Activated CD4-positive, alpha-beta memory T cell treated with anti-CD3 and anti-CD28 coated beads for 36 hours (primary cell): ENCODE measurements at regions of chr12 and their contacts with region 1.

Region 1: DNA sequence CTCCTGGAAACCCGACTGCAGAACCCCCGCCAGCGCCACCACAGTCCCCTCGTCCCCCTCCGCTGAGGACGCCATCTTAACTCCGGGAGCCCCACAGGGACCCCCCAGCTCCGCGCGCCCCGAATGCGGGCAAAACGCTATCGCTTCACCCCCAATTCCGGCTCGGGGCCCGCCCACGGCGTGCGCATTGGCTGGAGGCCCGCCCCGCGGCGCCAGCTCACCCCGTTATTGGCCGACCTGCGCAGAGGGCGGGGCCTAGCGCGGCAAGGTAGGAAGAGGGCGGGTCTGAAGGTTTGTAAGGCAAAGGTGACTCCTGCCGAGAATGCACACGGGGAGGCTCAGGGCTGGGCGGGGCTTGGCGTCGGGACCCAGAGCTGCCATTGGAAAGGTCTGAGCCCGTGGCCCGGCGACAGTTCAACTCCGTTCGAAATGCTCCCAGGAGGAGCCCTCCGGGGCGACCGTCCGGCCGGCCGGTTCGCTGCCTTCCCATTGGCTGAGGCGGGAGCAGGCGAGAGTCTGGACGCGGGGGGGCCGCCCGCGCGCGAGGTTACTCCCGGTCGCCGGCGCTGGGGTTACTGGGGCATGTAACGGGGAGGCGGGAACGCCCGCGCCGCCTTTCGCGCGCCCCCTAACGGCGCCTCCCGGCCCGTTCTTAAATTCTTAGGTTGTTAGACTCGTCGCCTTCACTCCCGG is at the start of gene LPCAT3:
- DNase-seq: peak; percentile 98
- H3K4me3 Mint-ChIP-seq: peak within 1 kb of the TSS; percentile 88
- H3K27ac Mint-ChIP-seq: peak within 1 kb of the TSS; percentile 73
- H3K4me1 Mint-ChIP-seq: peaks cover 26% of the 10 kb centered on the region
- H3K27me3 Mint-ChIP-seq: no peaks in the 10 kb centered on the region
- total RNA-seq, gene LPCAT3: 18.3 to 20.5 TPM

Region 2: DNA sequence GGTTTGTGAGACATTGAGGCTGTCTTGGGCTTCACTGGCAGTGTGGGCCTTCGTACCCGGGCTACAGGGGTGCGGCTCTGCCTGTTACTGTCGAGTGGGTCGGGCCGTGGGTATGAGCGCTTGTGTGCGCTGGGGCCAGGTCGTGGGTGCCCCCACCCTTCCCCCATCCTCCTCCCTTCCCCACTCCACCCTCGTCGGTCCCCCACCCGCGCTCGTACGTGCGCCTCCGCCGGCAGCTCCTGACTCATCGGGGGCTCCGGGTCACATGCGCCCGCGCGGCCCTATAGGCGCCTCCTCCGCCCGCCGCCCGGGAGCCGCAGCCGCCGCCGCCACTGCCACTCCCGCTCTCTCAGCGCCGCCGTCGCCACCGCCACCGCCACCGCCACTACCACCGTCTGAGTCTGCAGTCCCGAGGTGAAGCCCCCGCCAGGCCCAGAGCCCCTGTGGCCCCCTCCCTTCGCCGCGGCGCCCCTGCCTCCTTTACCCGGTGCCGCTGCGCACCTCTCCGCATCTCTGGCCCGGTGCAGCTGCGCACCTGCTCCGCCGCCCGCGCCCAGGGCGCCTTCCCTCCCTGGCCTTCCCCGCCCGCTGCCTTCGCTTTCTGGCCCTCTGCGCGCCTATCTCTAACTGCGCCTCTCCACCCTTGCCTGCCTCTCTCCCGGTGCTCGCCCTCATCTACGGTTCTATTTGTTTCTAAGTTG is 104.1 kb before region 1 on chr12 and contains the start of gene ENO2:
- CTCF ChIA-PET with region 1: interaction called, 3 read pairs
- POLR2A ChIA-PET with region 1: no interaction called
- intact Hi-C with region 1: loop called (anchors 2 kb)
- DNase-seq: peak; percentile 88
- H3K4me3 Mint-ChIP-seq: peak within 1 kb of the TSS; percentile 92
- H3K27ac Mint-ChIP-seq: peak within 1 kb of the TSS; percentile 88
- H3K4me1 Mint-ChIP-seq: peaks cover 30% of the 10 kb centered on the region
- H3K27me3 Mint-ChIP-seq: no peaks in the 10 kb centered on the region
- total RNA-seq, gene ENO2: 185 to 193 TPM

Region 3: DNA sequence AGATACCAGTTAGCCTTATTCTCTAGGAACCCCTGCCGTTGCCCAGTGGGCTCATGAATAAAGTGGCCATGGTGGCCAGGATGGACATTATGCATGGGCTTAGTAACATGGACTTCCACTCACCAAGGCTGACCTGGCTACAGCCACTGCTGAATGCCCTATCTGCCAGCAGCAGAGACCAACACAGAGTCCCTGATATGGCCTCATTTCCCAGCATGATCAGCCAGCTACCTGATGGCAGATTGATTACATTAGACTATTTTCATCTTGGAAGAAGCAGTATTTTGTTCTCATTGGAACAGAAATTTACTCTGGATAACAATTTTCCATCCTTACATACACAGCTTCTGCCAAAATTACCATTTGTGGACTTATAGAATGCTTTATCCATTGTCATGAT is 16.0 kb after region 1 on chr12:
- CTCF ChIA-PET with region 1: interaction called, 11 read pairs
- POLR2A ChIA-PET with region 1: interaction called, 3 read pairs
- intact Hi-C with region 1: no loop called
- DNase-seq: no peak
- H3K4me3 Mint-ChIP-seq: no peak overlapping the region
- H3K27ac Mint-ChIP-seq: no peak overlapping the region
- H3K4me1 Mint-ChIP-seq: peaks cover 6% of the 10 kb centered on the region
- H3K27me3 Mint-ChIP-seq: no peaks in the 10 kb centered on the region

Region 4: GRCh38 chr12:7042842-7043241 is 24.3 kb after region 1 on chr12:
- CTCF ChIA-PET with region 1: interaction called, 7 read pairs
- POLR2A ChIA-PET with region 1: no interaction called
- intact Hi-C with region 1: loop called (anchors 2 kb)
- DNase-seq: no peak
- H3K4me3 Mint-ChIP-seq: no peak overlapping the region
- H3K27ac Mint-ChIP-seq: no peak overlapping the region
- H3K4me1 Mint-ChIP-seq: peaks cover 7% of the 10 kb centered on the region
- H3K27me3 Mint-ChIP-seq: no peaks in the 10 kb centered on the region

Region 5: GRCh38 chr12:7129872-7130680 is 111.6 kb after region 1 on chr12 and contains the start of gene CLSTN3:
- CTCF ChIA-PET with region 1: interaction called, 3 read pairs
- POLR2A ChIA-PET with region 1: no interaction called
- intact Hi-C with region 1: loop called (anchors 5 kb)
- DNase-seq: peak; percentile 91
- H3K4me3 Mint-ChIP-seq: peak within 1 kb of the TSS; percentile 87
- H3K27ac Mint-ChIP-seq: peak within 1 kb of the TSS; percentile 65
- H3K4me1 Mint-ChIP-seq: peaks cover 28% of the 10 kb centered on the region
- H3K27me3 Mint-ChIP-seq: no peaks in the 10 kb centered on the region
- total RNA-seq, gene CLSTN3: 40.1 to 44.7 TPM

Region 6: DNA sequence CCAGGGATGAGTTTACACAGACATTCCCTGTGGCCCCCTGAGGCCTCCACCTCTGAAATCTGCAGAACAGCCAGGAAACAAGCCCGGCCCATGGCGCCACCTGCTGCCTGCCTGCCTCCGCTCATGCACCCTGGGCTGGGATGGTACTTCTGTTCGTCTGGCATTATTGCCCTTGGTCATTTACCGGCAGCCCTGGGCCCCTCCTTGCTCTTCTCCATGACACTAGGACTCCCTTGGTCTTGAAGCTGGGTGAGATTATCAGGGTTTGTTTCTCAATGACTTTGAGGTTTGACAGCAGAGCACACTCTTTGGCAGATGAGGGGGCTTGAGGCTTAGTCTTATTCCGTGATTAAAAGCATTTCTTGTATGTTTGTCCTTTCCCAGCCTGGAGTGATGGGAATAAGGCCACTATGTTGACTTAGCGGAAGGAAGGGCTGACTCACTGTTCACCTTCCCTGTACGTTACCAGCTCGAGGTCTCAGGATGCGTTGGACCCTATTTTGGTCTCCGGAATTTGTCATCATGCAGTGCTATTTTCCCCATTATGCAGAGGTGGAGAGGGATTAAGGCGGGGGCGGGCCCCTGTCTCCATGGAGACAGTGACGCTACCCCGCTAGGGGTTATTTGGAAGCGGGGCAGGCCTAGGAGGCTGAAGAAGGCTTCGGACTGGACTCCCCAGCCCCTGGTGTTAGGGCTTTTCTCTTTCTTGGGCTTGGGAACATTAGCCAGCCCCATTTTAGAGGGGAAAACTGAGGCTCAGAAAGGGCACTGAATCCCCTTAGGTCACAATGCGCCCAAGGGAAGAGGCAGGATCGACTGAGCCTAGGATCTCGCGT is 170.3 kb after region 1 on chr12:
- CTCF ChIA-PET with region 1: no interaction called
- POLR2A ChIA-PET with region 1: no interaction called
- intact Hi-C with region 1: loop called (anchors 1 kb)
- DNase-seq: peak; percentile 86
- H3K4me3 Mint-ChIP-seq: peak overlapping the region; percentile 86
- H3K27ac Mint-ChIP-seq: peak overlapping the region; percentile 94
- H3K4me1 Mint-ChIP-seq: peaks cover 39% of the 10 kb centered on the region
- H3K27me3 Mint-ChIP-seq: no peaks in the 10 kb centered on the region

Region 7: GRCh38 chr12:7327918-7328317 is 309.4 kb after region 1 on chr12:
- CTCF ChIA-PET with region 1: no interaction called
- POLR2A ChIA-PET with region 1: no interaction called
- intact Hi-C with region 1: no loop called
- DNase-seq: no peak
- H3K4me3 Mint-ChIP-seq: no peak overlapping the region
- H3K27ac Mint-ChIP-seq: no peak overlapping the region
- H3K4me1 Mint-ChIP-seq: no peaks in the 10 kb centered on the region
- H3K27me3 Mint-ChIP-seq: peaks cover 2% of the 10 kb centered on the region